ENCODE measurements at regions of chr6 and their contacts with region 1.

Region 1: DNA sequence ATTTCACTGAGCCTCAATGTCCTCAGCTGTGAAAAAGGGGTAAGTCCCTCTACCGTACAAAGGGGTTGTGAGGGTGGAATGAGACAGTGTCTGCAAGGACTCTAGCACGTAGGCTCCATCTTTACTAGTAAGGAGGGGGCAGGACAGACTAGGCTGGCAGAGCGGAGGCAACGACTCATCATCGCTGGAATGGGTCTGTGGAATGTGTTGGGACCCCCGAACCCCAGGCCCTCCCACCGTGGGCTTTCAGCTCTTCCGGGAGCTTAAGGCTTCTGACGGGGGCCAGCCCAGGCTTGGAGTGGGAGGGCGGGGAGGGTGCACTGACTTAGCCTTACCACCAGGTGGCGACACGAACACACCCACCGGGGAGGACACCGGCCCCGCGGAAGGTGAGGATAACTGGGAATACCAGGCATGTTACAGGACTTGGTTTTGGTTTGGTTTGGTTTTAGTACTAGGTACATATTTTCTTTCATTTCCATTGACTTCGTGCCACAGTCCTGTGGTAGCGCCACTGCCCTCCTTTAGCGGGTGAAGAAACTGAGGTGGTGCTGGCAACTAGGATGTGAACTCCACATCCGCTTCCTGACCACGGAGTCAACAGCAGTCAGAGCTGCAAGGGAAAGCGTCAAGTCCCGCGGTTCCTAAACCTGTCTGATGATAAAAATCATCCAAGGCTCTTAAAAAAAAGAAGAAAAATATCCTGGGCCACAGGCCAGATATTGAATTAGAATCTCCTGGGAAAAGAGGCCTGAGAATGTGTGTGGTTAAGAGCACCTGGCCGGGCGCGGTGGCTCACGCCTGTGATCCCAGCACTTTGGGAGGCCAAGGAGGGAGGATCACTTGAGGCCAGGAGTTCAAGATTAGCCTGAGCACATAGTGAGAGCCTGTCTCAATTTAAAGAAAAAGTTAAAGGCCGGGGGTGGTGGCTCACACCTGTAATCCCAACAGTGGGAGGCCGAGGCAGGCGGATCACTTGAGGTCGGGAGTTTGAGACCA is 10.3 kb upstream of the TULP1 start:
- DNase-seq: peak; percentile 55 to 65
- ATAC-seq: peak; percentile 93 to 96
- H3K4me3 ChIP-seq: no peak overlapping the region
- H3K27ac ChIP-seq: no peak overlapping the region
- H3K4me1 ChIP-seq: no peaks in the 10 kb centered on the region
- CTCF ChIP-seq: peak; percentile 78
- EP300 ChIP-seq: no peak
- POLR2A ChIP-seq: no peak
- RAD21 ChIP-seq: peak; percentile 84

Region 2: GRCh38 chr6:35533981-35534380 is 11.0 kb after region 1 on chr6:
- CTCF ChIA-PET with region 1: interaction called, 12 read pairs
- POLR2A ChIA-PET with region 1: no interaction called
- DNase-seq: no peak
- ATAC-seq: no peak
- H3K4me3 ChIP-seq: no peak overlapping the region
- H3K27ac ChIP-seq: no peak overlapping the region
- H3K4me1 ChIP-seq: no peaks in the 10 kb centered on the region
- CTCF ChIP-seq: no peak
- EP300 ChIP-seq: no peak
- POLR2A ChIP-seq: no peak
- RAD21 ChIP-seq: no peak

Region 3: GRCh38 chr6:36020154-36020553 is 497.2 kb after region 1 on chr6:
- CTCF ChIA-PET with region 1: no interaction called
- POLR2A ChIA-PET with region 1: no interaction called
- DNase-seq: no peak
- ATAC-seq: no peak
- H3K4me3 ChIP-seq: no peak overlapping the region
- H3K27ac ChIP-seq: no peak overlapping the region
- H3K4me1 ChIP-seq: no peaks in the 10 kb centered on the region
- CTCF ChIP-seq: no peak
- EP300 ChIP-seq: no peak
- POLR2A ChIP-seq: no peak
- RAD21 ChIP-seq: no peak

Measured in A549 (cell line).